ENCODE measurements at regions of chr3 and their contacts with region 1.

Region 1: DNA sequence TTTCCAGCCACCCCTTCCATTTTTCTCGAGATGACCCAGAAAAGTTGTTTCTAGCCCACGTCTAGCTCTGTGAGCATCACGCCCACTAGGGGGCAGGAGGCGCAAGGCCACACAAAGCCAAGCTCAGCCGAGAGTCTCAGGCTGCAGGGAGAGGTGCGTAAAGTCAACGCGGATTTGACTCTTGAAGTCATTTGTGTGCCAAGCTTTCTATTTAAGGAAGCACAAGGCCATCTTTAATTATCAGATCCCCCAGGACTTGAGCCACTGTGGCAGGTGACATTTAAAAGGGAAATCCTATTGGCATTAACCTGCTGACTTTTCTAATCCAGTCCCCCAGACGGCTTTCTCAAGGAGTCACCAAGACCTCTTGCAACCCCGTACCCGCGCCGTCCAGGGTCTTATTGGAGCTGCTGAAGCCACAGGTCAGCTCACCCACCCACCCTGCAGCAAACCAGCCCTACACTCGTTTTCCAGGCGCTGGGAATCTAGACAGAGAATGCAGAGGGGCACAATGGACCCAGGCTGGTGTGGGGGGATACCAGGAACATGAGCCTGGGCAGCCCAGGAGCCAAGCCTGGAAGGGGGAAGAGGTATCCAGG is 62.1 kb downstream of the CAPN7 start:
- DNase-seq: peak; percentile 88
- H3K4me3 ChIP-seq: no peak overlapping the region
- H3K27ac ChIP-seq: peak overlapping the region in 2 of 4 donors; percentile 21 to 51
- H3K4me1 ChIP-seq: peaks cover 0 to 40% (median 15%) of the 10 kb centered on the region in 4 donors
- H3K27me3 ChIP-seq: no peaks in the 10 kb centered on the region
- CTCF ChIP-seq: peak; percentile 91 to 97 (median 95)
- EP300 ChIP-seq: no peak
- POLR2A ChIP-seq: no peak

Region 2: DNA sequence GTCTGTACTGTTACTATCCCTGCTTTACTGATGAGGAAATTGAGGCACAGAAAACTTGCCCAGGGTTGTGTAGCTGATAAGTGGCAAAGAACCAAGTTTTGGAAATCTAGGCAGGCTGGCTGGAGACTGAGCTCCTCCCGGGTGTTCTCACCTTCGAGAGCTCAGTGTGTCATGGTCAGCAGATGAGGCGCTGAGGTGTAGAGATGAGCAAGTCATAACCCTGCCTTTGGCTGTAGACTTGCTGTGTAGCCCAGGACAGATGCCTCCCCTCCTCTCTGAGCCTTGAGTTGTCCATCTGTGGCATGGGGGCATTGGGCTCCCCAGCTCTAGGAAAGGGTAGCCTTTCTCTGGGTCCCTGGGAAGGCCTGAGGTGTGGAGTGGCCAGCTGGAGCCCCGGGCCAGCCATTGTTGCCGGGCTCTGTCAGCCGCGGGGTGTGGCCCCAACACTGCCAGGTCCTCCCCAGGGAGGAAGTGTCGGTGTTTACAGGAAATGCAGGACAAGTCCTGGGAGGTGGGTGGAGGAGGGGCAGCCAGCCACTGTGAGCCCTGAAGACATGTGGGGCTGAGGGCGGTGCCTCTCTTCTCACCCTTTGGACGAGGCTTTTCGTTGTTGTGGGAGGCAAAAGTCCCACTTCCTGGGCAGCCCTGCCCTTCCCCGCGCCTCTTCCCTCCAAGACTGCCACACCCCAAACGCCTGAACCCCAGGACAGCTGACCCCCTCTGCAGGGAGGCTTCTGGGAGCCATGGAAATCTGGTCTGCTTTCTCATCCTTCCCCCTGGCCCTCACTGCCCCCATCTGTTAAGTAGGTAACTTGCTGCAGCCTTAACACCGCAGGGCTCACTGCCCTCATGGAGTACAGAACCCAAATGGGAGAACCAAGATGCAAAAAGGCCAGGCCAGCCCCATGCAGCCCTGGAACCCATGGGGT is 420.3 kb before region 1 on chr3:
- in situ Hi-C with region 1: no loop called
- intact Hi-C with region 1: no loop called
- DNase-seq: peak; percentile 78
- H3K4me3 ChIP-seq: no peak overlapping the region
- H3K27ac ChIP-seq: peak overlapping the region; percentile 18 to 34 (median 24)
- H3K4me1 ChIP-seq: peaks cover 7 to 29% (median 12%) of the 10 kb centered on the region in 4 donors
- H3K27me3 ChIP-seq: no peaks in the 10 kb centered on the region
- CTCF ChIP-seq: no peak
- EP300 ChIP-seq: no peak
- POLR2A ChIP-seq: no peak

Region 3: GRCh38 chr3:15332405-15333098 is 64.4 kb after region 1 on chr3 and contains the start of gene SH3BP5:
- in situ Hi-C with region 1: loop called in 1 of 4 experiments (anchors 5 kb)
- intact Hi-C with region 1: loop called (anchors 1 kb)
- DNase-seq: peak; percentile 79
- H3K4me3 ChIP-seq: peak within 1 kb of the TSS; percentile 21 to 69 (median 64)
- H3K27ac ChIP-seq: peak within 1 kb of the TSS; percentile 72 to 82 (median 77)
- H3K4me1 ChIP-seq: peaks cover 1 to 21% (median 10%) of the 10 kb centered on the region in 4 donors
- H3K27me3 ChIP-seq: peaks cover 8% of the 10 kb centered on the region
- CTCF ChIP-seq: peak; percentile 25 to 79 (median 69)
- EP300 ChIP-seq: no peak
- POLR2A ChIP-seq: no peak
- total RNA-seq, gene SH3BP5: 7.5 to 32.4 (median 15.8) TPM

Region 4: GRCh38 chr3:15377961-15378791 is 110.0 kb after region 1 on chr3:
- in situ Hi-C with region 1: loop called (anchors 10 kb)
- intact Hi-C with region 1: loop called (anchors 5 kb)
- DNase-seq: peak; percentile 96
- H3K4me3 ChIP-seq: no peak overlapping the region
- H3K27ac ChIP-seq: peak overlapping the region; percentile 57 to 69 (median 67)
- H3K4me1 ChIP-seq: peaks cover 3 to 15% (median 6%) of the 10 kb centered on the region in 4 donors
- H3K27me3 ChIP-seq: no peaks in the 10 kb centered on the region
- CTCF ChIP-seq: peak; percentile 71 to 87 (median 80)
- EP300 ChIP-seq: peak; percentile 61
- POLR2A ChIP-seq: no peak

Region 5: DNA sequence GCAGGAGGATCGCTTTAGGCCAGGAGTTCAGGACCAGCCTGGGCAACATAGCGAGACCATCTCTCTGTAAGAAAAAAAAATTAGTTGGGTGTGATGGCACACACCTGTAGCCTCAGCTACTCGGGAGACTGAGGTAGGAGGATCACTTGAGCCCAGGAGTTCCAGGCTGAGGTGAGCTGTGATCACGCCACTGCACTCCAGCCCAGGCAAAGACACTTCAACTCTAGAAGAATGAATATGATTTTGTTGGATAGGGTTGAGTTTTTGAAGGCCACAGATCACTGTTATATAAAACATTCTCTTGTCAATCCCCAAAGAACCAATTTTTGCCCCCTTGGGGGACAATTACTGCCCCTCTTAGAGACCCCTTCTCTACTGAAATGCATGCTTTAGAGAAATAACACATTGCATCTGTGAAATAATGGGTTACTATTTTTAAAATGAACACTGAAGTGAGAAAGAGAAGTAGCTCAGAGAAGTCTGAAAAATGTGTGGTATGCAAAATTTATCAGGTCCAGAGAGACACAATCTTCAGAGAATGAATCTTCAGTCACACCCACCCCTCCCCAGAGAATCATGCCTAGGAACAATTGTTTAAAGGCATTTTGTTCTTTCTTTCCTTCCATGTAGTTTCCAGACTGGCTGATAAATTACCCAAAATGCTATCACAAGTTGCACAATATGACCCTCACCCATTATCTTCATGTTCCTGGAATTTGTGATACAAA is 116.5 kb after region 1 on chr3:
- in situ Hi-C with region 1: loop called (anchors 10 kb)
- intact Hi-C with region 1: loop called (anchors 5 kb)
- DNase-seq: no peak
- H3K4me3 ChIP-seq: no peak overlapping the region
- H3K27ac ChIP-seq: peak overlapping the region; percentile 19 to 65 (median 36)
- H3K4me1 ChIP-seq: peaks cover 0 to 15% (median 3%) of the 10 kb centered on the region in 4 donors
- H3K27me3 ChIP-seq: no peaks in the 10 kb centered on the region
- CTCF ChIP-seq: no peak
- EP300 ChIP-seq: no peak
- POLR2A ChIP-seq: no peak

Region 6: GRCh38 chr3:15557511-15557946 is 289.4 kb after region 1 on chr3:
- in situ Hi-C with region 1: loop called in 2 of 4 experiments (anchors 10 to 25 kb)
- intact Hi-C with region 1: no loop called
- DNase-seq: peak; percentile 66
- H3K4me3 ChIP-seq: no peak overlapping the region
- H3K27ac ChIP-seq: peak overlapping the region in 1 of 4 donors; percentile 28
- H3K4me1 ChIP-seq: peaks cover 0 to 18% (median 2%) of the 10 kb centered on the region in 4 donors
- H3K27me3 ChIP-seq: no peaks in the 10 kb centered on the region
- CTCF ChIP-seq: peak; percentile 51 to 68 (median 64)
- EP300 ChIP-seq: no peak
- POLR2A ChIP-seq: no peak

Region 7: DNA sequence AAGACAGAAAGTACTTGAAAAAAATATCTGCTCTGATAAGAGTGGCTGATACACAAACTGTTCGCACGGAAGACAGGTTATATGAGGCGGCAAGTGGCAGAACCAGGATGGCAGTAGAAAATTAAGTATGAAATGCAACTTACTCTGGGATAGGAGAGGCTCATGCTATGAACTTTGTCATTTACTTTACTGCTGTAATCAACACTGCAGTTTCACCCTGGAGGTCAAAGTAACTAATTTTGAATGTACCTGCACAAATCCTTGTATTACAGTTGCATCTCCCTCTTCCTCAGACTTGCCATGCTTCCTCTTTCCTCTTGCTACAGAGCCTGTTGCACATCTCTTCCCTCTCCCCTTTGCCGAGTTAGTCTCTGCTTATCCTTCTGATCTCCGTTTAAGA is 294.4 kb after region 1 on chr3:
- in situ Hi-C with region 1: loop called in 2 of 4 experiments (anchors 10 to 25 kb)
- intact Hi-C with region 1: no loop called
- DNase-seq: no peak
- H3K4me3 ChIP-seq: no peak overlapping the region
- H3K27ac ChIP-seq: peak overlapping the region in 2 of 4 donors; percentile 23 to 46
- H3K4me1 ChIP-seq: peaks cover 0 to 10% (median 2%) of the 10 kb centered on the region in 4 donors
- H3K27me3 ChIP-seq: no peaks in the 10 kb centered on the region
- CTCF ChIP-seq: no peak
- EP300 ChIP-seq: no peak
- POLR2A ChIP-seq: no peak

Measured in transverse colon (tissue), 4 donors.